CD4-positive, alpha-beta memory T cell (primary cell): ENCODE measurements at regions of chr7 and their contacts with region 1.

Region 1: GRCh38 chr7:43647673-43648472 is 65.0 kb downstream of the STK17A start:
- DNase-seq: peak in 3 of 5 donors; percentile 19 to 68 (median 24)
- H3K4me3 ChIP-seq: peak overlapping the region; percentile 3 to 64
- H3K4me3 Mint-ChIP-seq: peak overlapping the region; percentile 71 to 90 (median 82)
- H3K27ac ChIP-seq: peak overlapping the region; percentile 70
- H3K27ac Mint-ChIP-seq: peak overlapping the region; percentile 84 to 97 (median 91)
- H3K4me1 ChIP-seq: peaks cover 99% of the 10 kb centered on the region
- H3K4me1 Mint-ChIP-seq: peaks cover 78 to 99% (median 88%) of the 10 kb centered on the region in 4 donors
- H3K27me3 ChIP-seq: no peaks in the 10 kb centered on the region
- H3K27me3 Mint-ChIP-seq: no peaks in the 10 kb centered on the region

Region 2: GRCh38 chr7:42426164-42426563 is 1221.7 kb before region 1 on chr7:
- CTCF ChIA-PET with region 1: no interaction called
- POLR2A ChIA-PET with region 1: no interaction called
- intact Hi-C with region 1: no loop called
- DNase-seq: no peak
- H3K4me3 ChIP-seq: no peak overlapping the region
- H3K4me3 Mint-ChIP-seq: no peak overlapping the region
- H3K27ac ChIP-seq: no peak overlapping the region
- H3K27ac Mint-ChIP-seq: no peak overlapping the region
- H3K4me1 ChIP-seq: no peaks in the 10 kb centered on the region
- H3K4me1 Mint-ChIP-seq: no peaks in the 10 kb centered on the region
- H3K27me3 ChIP-seq: no peaks in the 10 kb centered on the region
- H3K27me3 Mint-ChIP-seq: no peaks in the 10 kb centered on the region

Region 3: DNA sequence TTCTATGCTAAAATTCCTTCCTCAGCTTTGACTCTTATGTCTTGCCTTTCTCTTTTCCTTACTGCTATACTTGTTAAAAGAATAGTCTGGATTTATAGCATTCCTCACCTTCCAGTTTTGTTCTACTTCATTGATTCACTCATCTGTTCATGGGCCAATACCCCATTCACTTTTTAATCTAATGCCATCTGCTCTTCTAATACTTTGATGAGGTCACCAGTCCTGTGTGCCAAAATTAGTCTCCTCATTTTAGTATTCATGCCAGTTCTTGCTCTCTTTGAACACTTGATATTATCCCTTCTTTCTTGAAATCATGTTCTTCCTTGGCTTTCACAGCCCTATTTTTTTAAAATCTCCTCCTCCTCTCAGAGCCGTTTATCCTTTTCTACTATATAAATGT is 45.6 kb before region 1 on chr7:
- CTCF ChIA-PET with region 1: no interaction called
- POLR2A ChIA-PET with region 1: interaction called, 18 read pairs
- intact Hi-C with region 1: no loop called
- DNase-seq: no peak
- H3K4me3 ChIP-seq: no peak overlapping the region
- H3K4me3 Mint-ChIP-seq: no peak overlapping the region
- H3K27ac ChIP-seq: no peak overlapping the region
- H3K27ac Mint-ChIP-seq: no peak overlapping the region
- H3K4me1 ChIP-seq: peaks cover 80% of the 10 kb centered on the region
- H3K4me1 Mint-ChIP-seq: peaks cover 21 to 50% (median 34%) of the 10 kb centered on the region in 4 donors
- H3K27me3 ChIP-seq: no peaks in the 10 kb centered on the region
- H3K27me3 Mint-ChIP-seq: no peaks in the 10 kb centered on the region

Region 4: GRCh38 chr7:43625453-43625852 is 22.4 kb before region 1 on chr7:
- CTCF ChIA-PET with region 1: interaction called, 5 read pairs
- POLR2A ChIA-PET with region 1: interaction called, 55 read pairs
- intact Hi-C with region 1: loop called (anchors 1 kb)
- DNase-seq: peak; percentile 63 to 82 (median 68)
- H3K4me3 ChIP-seq: no peak overlapping the region
- H3K4me3 Mint-ChIP-seq: peak overlapping the region; percentile 59 to 73 (median 70)
- H3K27ac ChIP-seq: peak overlapping the region; percentile 30
- H3K27ac Mint-ChIP-seq: peak overlapping the region in 6 of 7 donors; percentile 84 to 97 (median 89)
- H3K4me1 ChIP-seq: peaks cover 96% of the 10 kb centered on the region
- H3K4me1 Mint-ChIP-seq: peaks cover 3 to 94% (median 69%) of the 10 kb centered on the region in 4 donors
- H3K27me3 ChIP-seq: no peaks in the 10 kb centered on the region
- H3K27me3 Mint-ChIP-seq: no peaks in the 10 kb centered on the region

Region 5: GRCh38 chr7:43669286-43670081 is 21.6 kb after region 1 on chr7:
- CTCF ChIA-PET with region 1: interaction called, 13 read pairs
- POLR2A ChIA-PET with region 1: interaction called, 91 read pairs
- intact Hi-C with region 1: loop called (anchors 1 kb)
- DNase-seq: peak; percentile 77 to 93 (median 79)
- H3K4me3 ChIP-seq: peak overlapping the region in 1 of 2 donors; percentile 34
- H3K4me3 Mint-ChIP-seq: peak overlapping the region; percentile 82 to 92 (median 85)
- H3K27ac ChIP-seq: peak overlapping the region; percentile 66
- H3K27ac Mint-ChIP-seq: peak overlapping the region; percentile 85 to 98 (median 96)
- H3K4me1 ChIP-seq: peaks cover 60% of the 10 kb centered on the region
- H3K4me1 Mint-ChIP-seq: peaks cover 43 to 86% (median 68%) of the 10 kb centered on the region in 4 donors
- H3K27me3 ChIP-seq: no peaks in the 10 kb centered on the region
- H3K27me3 Mint-ChIP-seq: no peaks in the 10 kb centered on the region

Region 6: DNA sequence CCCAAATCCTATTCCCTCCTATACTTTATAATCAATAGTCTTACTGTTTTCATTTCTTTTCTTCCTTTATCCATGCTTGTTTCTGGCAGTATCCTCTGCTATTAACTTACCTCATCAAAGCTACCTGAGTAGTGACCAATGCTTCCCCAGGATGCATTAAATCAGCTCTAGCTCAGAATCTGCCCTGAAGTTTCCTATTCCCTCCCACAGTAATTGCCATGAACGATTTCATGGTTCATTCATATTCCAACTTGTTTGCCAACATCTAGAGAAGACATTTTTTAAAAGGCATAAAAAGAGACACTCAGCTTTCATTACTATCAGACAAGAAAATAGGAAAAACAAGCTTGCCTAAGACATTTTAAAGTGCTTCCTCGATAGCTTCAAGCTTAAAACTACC is 39.1 kb after region 1 on chr7:
- CTCF ChIA-PET with region 1: interaction called, 3 read pairs
- POLR2A ChIA-PET with region 1: interaction called, 13 read pairs
- intact Hi-C with region 1: loop called (anchors 5 kb)
- DNase-seq: no peak
- H3K4me3 ChIP-seq: no peak overlapping the region
- H3K4me3 Mint-ChIP-seq: no peak overlapping the region
- H3K27ac ChIP-seq: no peak overlapping the region
- H3K27ac Mint-ChIP-seq: peak overlapping the region in 2 of 7 donors; percentile 1 to 14
- H3K4me1 ChIP-seq: peaks cover 27% of the 10 kb centered on the region
- H3K4me1 Mint-ChIP-seq: peaks cover 45 to 73% (median 55%) of the 10 kb centered on the region in 4 donors
- H3K27me3 ChIP-seq: no peaks in the 10 kb centered on the region
- H3K27me3 Mint-ChIP-seq: no peaks in the 10 kb centered on the region

Region 7: GRCh38 chr7:43721193-43721806 is 73.4 kb after region 1 on chr7:
- CTCF ChIA-PET with region 1: no interaction called
- POLR2A ChIA-PET with region 1: no interaction called
- intact Hi-C with region 1: no loop called
- DNase-seq: peak in 4 of 5 donors; percentile 54 to 59 (median 58)
- H3K4me3 ChIP-seq: no peak overlapping the region
- H3K4me3 Mint-ChIP-seq: no peak overlapping the region
- H3K27ac ChIP-seq: no peak overlapping the region
- H3K27ac Mint-ChIP-seq: peak overlapping the region in 3 of 7 donors; percentile 14 to 71 (median 47)
- H3K4me1 ChIP-seq: no peaks in the 10 kb centered on the region
- H3K4me1 Mint-ChIP-seq: peaks cover 23 to 46% (median 34%) of the 10 kb centered on the region in 4 donors
- H3K27me3 ChIP-seq: no peaks in the 10 kb centered on the region
- H3K27me3 Mint-ChIP-seq: no peaks in the 10 kb centered on the region